ENCODE measurements at regions of chr6 and their contacts with region 1.

Region 1: DNA sequence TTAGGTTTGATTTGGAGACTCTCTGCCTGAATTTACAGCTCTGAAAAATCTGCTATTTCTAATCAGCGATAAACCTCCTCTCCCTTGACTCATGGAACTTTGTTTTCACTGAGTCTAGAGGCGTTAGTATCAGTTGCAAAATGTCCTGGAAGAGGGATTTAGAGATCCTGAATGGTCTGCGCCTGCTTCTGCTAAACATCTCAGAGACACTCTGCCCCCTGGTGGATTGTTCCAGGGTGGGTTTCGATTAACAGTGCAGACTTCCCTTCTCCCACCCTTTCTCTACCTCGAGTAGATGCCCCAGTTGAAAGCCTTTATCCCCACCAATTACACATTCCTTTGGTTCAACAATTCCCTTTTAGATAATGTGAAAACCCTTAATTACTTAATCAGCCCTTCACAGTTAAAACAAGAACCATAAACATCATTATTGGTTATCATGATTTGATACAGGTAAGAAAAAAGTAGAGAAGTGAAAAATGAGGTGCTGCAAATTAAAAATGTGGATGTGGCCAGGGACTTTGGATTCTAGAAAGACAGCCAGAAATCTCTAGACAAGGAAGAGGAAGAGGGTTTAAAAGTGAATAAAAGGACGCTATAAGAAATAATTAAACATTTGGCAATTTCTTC is 5.5 kb downstream of the HTR1B start:
- DNase-seq: no peak
- H3K4me3 ChIP-seq: no peak overlapping the region
- H3K27ac ChIP-seq: peak overlapping the region in 3 of 4 donors; percentile 11 to 57 (median 24)
- H3K4me1 ChIP-seq: peaks cover 0 to 33% (median 14%) of the 10 kb centered on the region in 4 donors
- H3K27me3 ChIP-seq: peaks cover 0 to 13% (median 2%) of the 10 kb centered on the region in 4 donors
- CTCF ChIP-seq: peak; percentile 69 to 79 (median 74)
- EP300 ChIP-seq: no peak
- POLR2A ChIP-seq: no peak

Region 2: GRCh38 chr6:75934643-75935472 is 1523.0 kb before region 1 on chr6:
- intact Hi-C with region 1: loop called (anchors 10 kb)
- DNase-seq: no peak
- H3K4me3 ChIP-seq: peak overlapping the region; percentile 37 to 49 (median 44)
- H3K27ac ChIP-seq: no peak overlapping the region
- H3K4me1 ChIP-seq: peaks cover 5 to 10% (median 9%) of the 10 kb centered on the region in 4 donors
- H3K27me3 ChIP-seq: no peaks in the 10 kb centered on the region
- CTCF ChIP-seq: peak; percentile 57 to 73 (median 72)
- EP300 ChIP-seq: no peak
- POLR2A ChIP-seq: no peak

Region 3: DNA sequence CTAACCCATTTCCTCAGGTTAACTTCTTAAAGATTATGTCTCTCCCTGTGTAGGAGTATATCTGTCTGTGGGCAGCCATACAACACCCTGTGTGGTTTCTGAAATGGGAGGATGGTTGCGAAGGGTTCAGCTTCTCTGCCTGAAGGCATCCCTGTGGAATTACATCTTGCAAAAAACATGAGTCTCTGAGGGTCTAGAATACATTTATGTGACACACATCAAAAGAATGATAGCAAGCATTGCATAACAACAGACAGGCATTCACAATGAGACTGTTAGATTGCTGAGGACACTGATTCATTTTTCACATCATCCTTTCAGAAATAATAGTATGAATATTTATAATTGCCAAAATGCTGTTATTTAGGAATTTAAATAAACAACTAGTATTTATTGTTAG is 665.4 kb before region 1 on chr6:
- intact Hi-C with region 1: no loop called
- DNase-seq: no peak
- H3K4me3 ChIP-seq: no peak overlapping the region
- H3K27ac ChIP-seq: no peak overlapping the region
- H3K4me1 ChIP-seq: no peaks in the 10 kb centered on the region
- H3K27me3 ChIP-seq: no peaks in the 10 kb centered on the region
- CTCF ChIP-seq: no peak
- EP300 ChIP-seq: no peak
- POLR2A ChIP-seq: no peak